ENCODE measurements at regions of chr3 and their contacts with region 1.

Region 1: GRCh38 chr3:179322286-179323196 is at the start of gene ZNF639:
- DNase-seq: peak; percentile 93
- CTCF ChIP-seq: peak; percentile 91

Region 2: GRCh38 chr3:178436773-178437172 is 885.8 kb before region 1 on chr3:
- in situ Hi-C with region 1: loop called (anchors 25 kb)
- DNase-seq: peak; percentile 60
- CTCF ChIP-seq: no peak

Region 3: DNA sequence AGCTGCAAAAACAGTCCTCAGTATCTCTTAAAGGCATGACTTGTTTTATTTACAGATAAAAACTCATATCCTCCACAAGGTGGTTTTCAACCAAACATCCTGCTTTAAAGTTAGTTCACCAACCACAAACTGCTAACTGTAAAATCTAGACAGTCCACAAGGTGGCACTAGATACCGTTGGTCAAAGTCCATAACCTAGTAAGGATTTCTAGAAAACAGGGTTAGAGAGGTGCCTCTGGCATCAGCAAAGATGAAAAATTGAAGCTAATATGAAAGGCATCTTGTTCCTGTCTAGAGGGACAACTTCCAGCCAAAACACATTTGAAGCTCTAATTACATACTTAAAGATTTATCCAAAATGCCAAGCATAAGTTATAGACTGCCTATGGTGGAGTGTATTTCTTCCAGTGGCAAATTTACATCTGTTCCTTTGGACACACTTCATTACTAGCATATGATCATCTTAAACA is 307.0 kb before region 1 on chr3:
- in situ Hi-C with region 1: loop called (anchors 5 kb)
- DNase-seq: peak; percentile 42
- CTCF ChIP-seq: peak; percentile 72

Region 4: GRCh38 chr3:179956416-179956830 is 633.9 kb after region 1 on chr3:
- in situ Hi-C with region 1: no loop called
- DNase-seq: peak; percentile 21
- CTCF ChIP-seq: no peak